ENCODE measurements at regions of chr3 and their contacts with region 1.

Region 1: GRCh38 chr3:134250717-134251220 is at the start of gene RYK:
- DNase-seq: peak; percentile 86
- ATAC-seq: peak; percentile 74
- H3K4me3 Mint-ChIP-seq: peak within 1 kb of the TSS; percentile 94
- H3K27ac Mint-ChIP-seq: peak within 1 kb of the TSS; percentile 92
- H3K4me1 Mint-ChIP-seq: peaks cover 57% of the 10 kb centered on the region
- H3K27me3 Mint-ChIP-seq: no peaks in the 10 kb centered on the region
- CTCF ChIP-seq: no peak
- total RNA-seq, gene RYK: 34.0 and 38.8 TPM in 2 replicates

Region 2: GRCh38 chr3:134236505-134237170 is 14.1 kb before region 1 on chr3:
- CTCF ChIA-PET with region 1: interaction called, 5 read pairs
- POLR2A ChIA-PET with region 1: interaction called, 22 read pairs
- intact Hi-C with region 1: loop called (anchors 1 kb)
- DNase-seq: no peak
- ATAC-seq: peak; percentile 38
- H3K4me3 Mint-ChIP-seq: peak overlapping the region; percentile 39
- H3K27ac Mint-ChIP-seq: peak overlapping the region; percentile 48
- H3K4me1 Mint-ChIP-seq: peaks cover 76% of the 10 kb centered on the region
- H3K27me3 Mint-ChIP-seq: no peaks in the 10 kb centered on the region
- CTCF ChIP-seq: no peak

Region 3: GRCh38 chr3:134299185-134299887 is 48.6 kb after region 1 on chr3:
- CTCF ChIA-PET with region 1: no interaction called
- POLR2A ChIA-PET with region 1: no interaction called
- intact Hi-C with region 1: loop called (anchors 2 kb)
- DNase-seq: no peak
- ATAC-seq: no peak
- H3K4me3 Mint-ChIP-seq: no peak overlapping the region
- H3K27ac Mint-ChIP-seq: no peak overlapping the region
- H3K4me1 Mint-ChIP-seq: no peaks in the 10 kb centered on the region
- H3K27me3 Mint-ChIP-seq: peaks cover 7% of the 10 kb centered on the region
- CTCF ChIP-seq: no peak

Measured in activated B cell treated with CpG ODN at 0.5 μM for 24 hours (primary cell).